Activated naive CD4-positive, alpha-beta T cell treated with anti-CD3 and anti-CD28 coated beads for 36 hours (primary cell): ENCODE measurements at regions of chr6 and their contacts with region 1.

Region 1: GRCh38 chr6:99425647-99426453 is 742 bp upstream of the PNISR start:
- DNase-seq: peak; percentile 83
- H3K4me3 Mint-ChIP-seq: peak overlapping the region; percentile 95
- H3K27ac Mint-ChIP-seq: peak overlapping the region; percentile 99
- H3K4me1 Mint-ChIP-seq: peaks cover 58% of the 10 kb centered on the region
- H3K27me3 Mint-ChIP-seq: no peaks in the 10 kb centered on the region

Region 2: GRCh38 chr6:98947351-98948292 is 478.2 kb before region 1 on chr6 and contains the start of gene FBXL4:
- CTCF ChIA-PET with region 1: no interaction called
- intact Hi-C with region 1: loop called (anchors 1 kb)
- DNase-seq: peak; percentile 84
- H3K4me3 Mint-ChIP-seq: peak within 1 kb of the TSS; percentile 93
- H3K27ac Mint-ChIP-seq: peak within 1 kb of the TSS; percentile 93
- H3K4me1 Mint-ChIP-seq: peaks cover 34% of the 10 kb centered on the region
- H3K27me3 Mint-ChIP-seq: peaks cover 2% of the 10 kb centered on the region
- total RNA-seq, gene FBXL4: 16.3 to 16.7 TPM

Region 3: GRCh38 chr6:99393698-99394531 is 31.9 kb before region 1 on chr6 and contains the start of gene COQ3:
- CTCF ChIA-PET with region 1: interaction called, 5 read pairs
- intact Hi-C with region 1: loop called (anchors 1 kb)
- DNase-seq: peak; percentile 66
- H3K4me3 Mint-ChIP-seq: peak within 1 kb of the TSS; percentile 91
- H3K27ac Mint-ChIP-seq: peak within 1 kb of the TSS; percentile 91
- H3K4me1 Mint-ChIP-seq: peaks cover 13% of the 10 kb centered on the region
- H3K27me3 Mint-ChIP-seq: no peaks in the 10 kb centered on the region
- total RNA-seq, gene COQ3: 17.4 to 17.7 TPM

Region 4: GRCh38 chr6:99458319-99458718 is 32.5 kb after region 1 on chr6:
- CTCF ChIA-PET with region 1: no interaction called
- intact Hi-C with region 1: no loop called
- DNase-seq: peak; percentile 5
- H3K4me3 Mint-ChIP-seq: no peak overlapping the region
- H3K27ac Mint-ChIP-seq: no peak overlapping the region
- H3K4me1 Mint-ChIP-seq: no peaks in the 10 kb centered on the region
- H3K27me3 Mint-ChIP-seq: no peaks in the 10 kb centered on the region

Region 5: DNA sequence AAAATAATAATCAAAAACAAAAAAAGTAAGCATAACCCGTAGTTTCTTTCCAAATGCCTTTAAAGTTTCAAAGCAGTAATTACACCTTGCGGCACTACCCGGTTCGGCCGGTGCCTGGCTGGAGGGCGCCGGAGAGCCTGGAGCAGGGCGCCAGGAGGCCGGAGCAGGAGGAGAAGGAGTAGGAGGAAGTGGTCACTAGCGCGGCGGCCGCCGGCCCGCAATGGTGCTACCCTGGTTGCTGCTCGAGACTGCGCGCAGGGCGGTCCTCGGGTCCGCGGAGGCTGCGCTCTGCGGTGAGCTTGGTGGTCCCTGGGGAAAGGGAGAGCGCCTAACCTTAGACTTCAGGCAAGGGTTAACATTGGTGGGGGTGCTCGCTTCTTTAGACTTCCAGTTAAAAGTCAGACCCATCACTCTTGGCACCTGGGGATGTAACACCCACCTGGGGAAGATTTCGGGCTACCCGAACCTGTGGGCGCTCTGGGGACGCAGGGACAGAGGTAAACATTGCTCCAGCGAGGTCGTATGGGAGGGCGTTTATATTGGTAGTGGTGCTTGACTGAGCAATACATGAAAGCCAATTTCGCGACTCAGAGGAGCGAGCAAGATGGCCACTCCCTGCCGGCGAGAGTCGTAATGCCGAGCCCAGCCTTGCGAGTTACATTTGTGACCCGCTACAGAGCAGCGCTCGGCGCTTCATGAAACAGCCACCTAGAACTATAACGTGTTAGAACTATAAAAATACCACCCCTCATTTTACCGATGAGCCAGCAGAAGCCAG is 95.2 kb after region 1 on chr6:
- CTCF ChIA-PET with region 1: interaction called, 4 read pairs
- intact Hi-C with region 1: loop called (anchors 1 kb)
- DNase-seq: peak; percentile 80
- H3K4me3 Mint-ChIP-seq: peak overlapping the region; percentile 96
- H3K27ac Mint-ChIP-seq: peak overlapping the region; percentile 84
- H3K4me1 Mint-ChIP-seq: peaks cover 12% of the 10 kb centered on the region
- H3K27me3 Mint-ChIP-seq: peaks cover 3% of the 10 kb centered on the region

Region 6: GRCh38 chr6:99613409-99613704 is 187.5 kb after region 1 on chr6:
- CTCF ChIA-PET with region 1: no interaction called
- intact Hi-C with region 1: loop called (anchors 1 kb)
- DNase-seq: peak; percentile 35
- H3K4me3 Mint-ChIP-seq: peak overlapping the region; percentile 34
- H3K27ac Mint-ChIP-seq: no peak overlapping the region
- H3K4me1 Mint-ChIP-seq: peaks cover 30% of the 10 kb centered on the region
- H3K27me3 Mint-ChIP-seq: peaks cover 70% of the 10 kb centered on the region